ENCODE measurements at regions of chr17 and their contacts with region 1.

Region 1: GRCh38 chr17:50681263-50682210 is 26.2 kb downstream of the ANKRD40 start:
- DNase-seq: peak; percentile 94
- H3K4me3 ChIP-seq: peak overlapping the region in 2 of 4 donors; percentile 8 to 11
- H3K27ac ChIP-seq: peak overlapping the region in 2 of 4 donors; percentile 9 to 48
- H3K4me1 ChIP-seq: peaks cover 9 to 27% (median 22%) of the 10 kb centered on the region in 4 donors
- H3K27me3 ChIP-seq: no peaks in the 10 kb centered on the region
- CTCF ChIP-seq: peak; percentile 49 to 57 (median 56)
- EP300 ChIP-seq: no peak
- POLR2A ChIP-seq: no peak

Region 2: DNA sequence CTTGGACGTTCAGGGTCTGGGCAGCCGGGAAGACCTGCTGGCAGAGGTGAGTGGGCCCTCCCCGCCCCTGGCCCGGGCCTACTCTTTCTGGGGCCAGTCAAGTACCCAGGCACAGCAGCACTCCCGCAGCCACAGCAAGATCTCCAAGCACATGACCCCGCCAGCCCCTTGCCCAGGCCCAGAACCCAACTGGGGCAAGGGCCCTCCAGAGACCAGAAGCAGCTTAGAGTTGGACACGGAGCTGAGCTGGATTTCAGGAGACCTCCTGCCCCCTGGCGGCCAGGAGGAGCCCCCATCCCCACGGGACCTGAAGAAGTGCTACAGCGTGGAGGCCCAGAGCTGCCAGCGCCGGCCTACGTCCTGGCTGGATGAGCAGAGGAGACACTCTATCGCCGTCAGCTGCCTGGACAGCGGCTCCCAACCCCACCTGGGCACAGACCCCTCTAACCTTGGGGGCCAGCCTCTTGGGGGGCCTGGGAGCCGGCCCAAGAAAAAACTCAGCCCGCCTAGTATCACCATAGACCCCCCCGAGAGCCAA is 55.4 kb before region 1 on chr17:
- intact Hi-C with region 1: loop called (anchors 2 kb)
- DNase-seq: no peak
- H3K4me3 ChIP-seq: no peak overlapping the region
- H3K27ac ChIP-seq: no peak overlapping the region
- H3K4me1 ChIP-seq: peaks cover 0 to 11% (median 8%) of the 10 kb centered on the region in 4 donors
- H3K27me3 ChIP-seq: peaks cover 0 to 67% (median 5%) of the 10 kb centered on the region in 4 donors
- CTCF ChIP-seq: peak; percentile 67 to 69 (median 69)
- EP300 ChIP-seq: no peak
- POLR2A ChIP-seq: no peak

Region 3: DNA sequence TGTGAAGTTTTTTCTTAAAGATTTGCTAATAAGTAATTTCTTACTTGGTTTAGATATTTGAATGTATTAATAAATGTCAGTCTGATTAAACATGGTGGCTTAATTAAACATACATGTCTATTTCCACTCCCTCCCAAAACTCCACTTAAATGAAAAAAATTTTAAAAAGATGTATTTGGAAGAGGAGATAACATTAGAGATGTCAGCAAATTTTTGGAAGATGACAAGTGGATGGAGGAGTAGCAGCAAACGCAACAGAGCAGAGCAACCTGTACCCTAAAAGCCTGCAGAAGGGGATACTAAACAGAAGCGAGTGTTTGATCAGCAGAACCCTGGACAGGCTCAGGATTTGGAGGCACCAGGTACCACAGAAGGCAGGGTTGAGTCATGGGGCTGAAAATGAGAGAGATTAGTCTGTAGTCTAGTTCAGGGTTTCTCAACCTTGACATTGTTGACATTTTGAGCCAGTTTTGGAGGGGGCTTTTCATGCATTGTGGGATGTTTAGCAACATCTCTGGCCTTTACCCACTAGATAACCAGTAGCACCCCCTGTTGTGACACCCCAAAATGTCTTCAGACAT is 55.7 kb after region 1 on chr17:
- intact Hi-C with region 1: no loop called
- DNase-seq: peak; percentile 80
- H3K4me3 ChIP-seq: no peak overlapping the region
- H3K27ac ChIP-seq: no peak overlapping the region
- H3K4me1 ChIP-seq: peaks cover 2 to 45% (median 34%) of the 10 kb centered on the region in 4 donors
- H3K27me3 ChIP-seq: no peaks in the 10 kb centered on the region
- CTCF ChIP-seq: no peak
- EP300 ChIP-seq: no peak
- POLR2A ChIP-seq: no peak

Measured in esophagus muscularis mucosa (tissue), 4 donors.